Activated CD4-positive, alpha-beta T cell treated with anti-CD3 and anti-CD28 coated beads, Interleukin-2, amount 10 ng/mL, durations not matched to agents 7 days and 5 days (primary cell): ENCODE measurements at regions of chr13 and their contacts with region 1.

Region 1: DNA sequence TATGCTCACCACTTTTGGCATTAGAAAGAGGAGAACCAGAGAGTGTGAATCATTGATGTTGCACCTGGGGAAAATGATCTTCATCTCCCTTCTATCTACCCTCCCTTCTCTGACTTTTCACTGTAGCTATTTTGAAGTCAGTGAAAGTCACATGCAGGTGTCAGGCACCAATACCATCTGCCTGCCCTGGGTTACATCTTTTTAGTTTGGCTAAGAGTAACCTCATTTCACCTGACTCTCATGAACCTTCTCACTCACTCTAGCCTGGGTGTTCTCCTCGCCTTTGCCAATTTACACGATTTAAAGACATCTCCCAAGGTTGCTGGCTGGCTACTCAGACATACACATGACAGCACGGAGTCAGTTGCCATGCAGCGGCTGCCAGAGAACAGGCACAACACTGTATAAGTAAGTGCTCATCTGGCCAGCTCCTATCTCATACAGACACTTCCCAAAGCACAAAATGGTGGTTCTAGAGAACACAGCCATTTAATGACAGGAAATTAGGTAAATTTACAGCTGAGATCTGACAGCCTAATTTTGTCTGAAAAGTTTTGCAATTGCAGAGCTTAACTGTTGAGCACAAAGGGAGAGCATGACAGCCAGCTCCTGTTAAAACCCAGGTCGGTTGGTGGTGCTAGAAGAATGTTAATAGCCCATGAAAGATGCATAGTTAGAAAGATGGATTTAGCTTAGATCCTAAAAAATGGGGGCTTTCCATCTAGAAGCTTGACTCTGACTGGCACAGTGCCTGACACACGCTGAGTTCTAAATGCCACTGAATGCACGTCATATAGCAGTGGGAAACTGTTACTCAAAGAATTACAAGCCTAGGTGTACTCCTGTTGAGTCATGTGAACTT is 32.5 kb downstream of the LCP1 start:
- DNase-seq: no peak
- H3K4me3 Mint-ChIP-seq: no peak overlapping the region
- H3K27ac Mint-ChIP-seq: peak overlapping the region; percentile 77
- H3K4me1 Mint-ChIP-seq: peaks cover 36% of the 10 kb centered on the region
- H3K27me3 Mint-ChIP-seq: no peaks in the 10 kb centered on the region

Region 2: DNA sequence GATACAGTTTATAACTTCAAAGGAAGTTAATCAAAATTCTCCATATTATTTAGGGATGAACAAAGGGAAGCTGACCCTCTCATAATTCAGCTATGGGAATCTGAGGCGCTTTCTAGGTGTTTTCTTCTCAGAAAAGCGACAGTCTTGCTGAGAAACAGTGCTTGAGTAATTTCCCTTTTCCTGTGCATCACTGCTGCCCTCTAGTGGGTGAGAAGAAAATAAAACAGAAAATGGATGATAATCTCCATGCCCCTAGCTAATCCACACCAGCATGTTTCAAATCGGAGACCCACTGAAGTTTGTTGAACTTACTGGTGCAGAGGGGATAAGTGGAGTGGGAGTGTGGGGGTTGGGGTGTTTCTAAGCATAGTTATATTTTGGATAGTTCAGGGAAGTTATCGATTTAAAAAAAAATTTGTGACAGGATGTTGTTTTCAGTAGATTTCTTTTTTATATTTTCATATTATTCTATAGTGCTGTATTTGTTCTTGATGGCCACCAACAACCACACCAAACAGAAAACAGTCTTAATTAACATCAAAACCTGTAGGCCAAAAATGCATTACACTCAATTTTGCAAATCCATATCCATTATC is 11.1 kb after region 1 on chr13:
- CTCF ChIA-PET with region 1: interaction called, 31 read pairs
- POLR2A ChIA-PET with region 1: no interaction called
- DNase-seq: peak; percentile 66
- H3K4me3 Mint-ChIP-seq: peak overlapping the region; percentile 55
- H3K27ac Mint-ChIP-seq: peak overlapping the region; percentile 78
- H3K4me1 Mint-ChIP-seq: peaks cover 59% of the 10 kb centered on the region
- H3K27me3 Mint-ChIP-seq: no peaks in the 10 kb centered on the region

Region 3: DNA sequence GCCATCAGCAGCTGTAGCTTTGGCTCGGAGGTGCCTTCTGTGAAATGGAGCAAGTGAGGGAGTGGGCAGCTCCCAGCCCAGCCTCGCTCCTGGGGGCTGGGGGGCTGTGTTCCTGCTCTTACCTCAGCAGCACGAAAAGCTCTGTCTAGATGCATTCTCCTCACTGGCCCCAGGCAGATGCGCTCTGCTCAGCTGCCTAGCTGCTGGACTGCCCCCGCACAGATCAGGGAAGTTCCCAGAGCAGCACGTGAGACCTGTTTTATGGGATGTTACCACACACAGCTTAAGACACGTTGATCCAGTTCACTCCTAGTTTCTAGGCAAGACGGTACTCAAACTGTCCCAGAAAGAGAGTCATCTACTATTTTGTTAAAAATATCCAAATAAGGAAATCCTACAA is 18.8 kb after region 1 on chr13:
- CTCF ChIA-PET with region 1: interaction called, 14 read pairs
- POLR2A ChIA-PET with region 1: interaction called, 4 read pairs
- DNase-seq: no peak
- H3K4me3 Mint-ChIP-seq: peak overlapping the region; percentile 93
- H3K27ac Mint-ChIP-seq: peak overlapping the region; percentile 92
- H3K4me1 Mint-ChIP-seq: peaks cover 89% of the 10 kb centered on the region
- H3K27me3 Mint-ChIP-seq: no peaks in the 10 kb centered on the region